T-cell (primary cell): ENCODE measurements at regions of chr4 and their contacts with region 1.

Region 1: DNA sequence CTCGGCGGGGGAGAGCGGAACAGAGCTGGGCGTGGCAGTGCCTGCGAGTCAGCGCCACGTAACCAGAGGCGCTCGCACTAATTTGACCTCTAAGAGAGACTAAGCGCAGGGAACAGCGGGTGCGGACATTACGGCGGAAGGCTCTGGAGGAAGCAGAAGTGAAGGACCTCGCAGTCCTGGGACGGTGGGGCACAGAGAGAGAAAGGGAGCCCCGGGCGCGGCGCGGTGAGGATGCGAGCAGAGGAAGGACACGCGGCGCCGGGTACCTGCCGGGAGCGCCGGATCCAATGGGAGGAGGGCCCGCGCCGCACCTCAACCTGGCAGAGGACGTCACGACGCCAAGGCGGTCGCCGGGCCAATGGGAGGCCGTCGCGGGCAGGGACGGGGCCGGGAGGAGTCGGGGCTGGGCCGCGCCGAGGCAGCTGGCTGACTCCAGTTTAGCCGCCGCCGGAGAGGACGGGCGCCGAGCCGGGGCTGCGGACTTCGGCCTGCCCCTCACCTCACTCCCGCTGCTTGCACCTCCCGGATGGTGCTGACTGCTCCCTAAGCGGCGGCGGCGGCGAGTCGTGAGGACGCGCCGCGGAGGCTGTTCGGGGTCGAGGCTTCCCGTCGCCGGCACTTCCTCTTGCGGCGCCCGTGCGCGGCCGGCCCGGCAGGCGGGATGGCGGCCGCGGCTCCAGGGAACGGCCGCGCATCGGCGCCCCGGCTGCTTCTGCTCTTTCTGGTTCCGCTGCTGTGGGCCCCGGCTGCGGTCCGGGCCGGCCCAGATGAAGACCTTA is at the start of gene TMEM165:
- DNase-seq: peak; percentile 72 to 92 (median 81)
- ATAC-seq: peak; percentile 95 to 97 (median 96)
- H3K4me3 ChIP-seq: peak within 1 kb of the TSS; percentile 68 to 81
- H3K4me3 Mint-ChIP-seq: peak within 1 kb of the TSS; percentile 95 to 97 (median 96)
- H3K27ac ChIP-seq: peak within 1 kb of the TSS; percentile 79
- H3K27ac Mint-ChIP-seq: peak within 1 kb of the TSS; percentile 95 to 99
- H3K4me1 ChIP-seq: peaks cover 26 to 29% of the 10 kb centered on the region in 2 experiments
- H3K4me1 Mint-ChIP-seq: peaks cover 39 to 44% (median 42%) of the 10 kb centered on the region in 3 donors
- H3K27me3 ChIP-seq: no peaks in the 10 kb centered on the region
- H3K27me3 Mint-ChIP-seq: no peaks in the 10 kb centered on the region
- total RNA-seq, gene TMEM165: 48.5 to 65.0 (median 56.8) TPM

Region 2: GRCh38 chr4:54056360-54056759 is 1339.4 kb before region 1 on chr4:
- CTCF ChIA-PET with region 1: no interaction called
- POLR2A ChIA-PET with region 1: interaction called in 1 of 2 experiments, 10 read pairs
- DNase-seq: peak in 1 of 35 experiments; percentile 28
- ATAC-seq: peak; percentile 67 to 76 (median 72)
- H3K4me3 ChIP-seq: no peak overlapping the region
- H3K4me3 Mint-ChIP-seq: peak overlapping the region; percentile 13 to 74 (median 25)
- H3K27ac ChIP-seq: no peak overlapping the region
- H3K27ac Mint-ChIP-seq: no peak overlapping the region
- H3K4me1 ChIP-seq: peaks cover 14 to 48% of the 10 kb centered on the region in 2 experiments
- H3K4me1 Mint-ChIP-seq: peaks cover 77 to 81% (median 78%) of the 10 kb centered on the region in 3 donors
- H3K27me3 ChIP-seq: no peaks in the 10 kb centered on the region
- H3K27me3 Mint-ChIP-seq: no peaks in the 10 kb centered on the region

Region 3: DNA sequence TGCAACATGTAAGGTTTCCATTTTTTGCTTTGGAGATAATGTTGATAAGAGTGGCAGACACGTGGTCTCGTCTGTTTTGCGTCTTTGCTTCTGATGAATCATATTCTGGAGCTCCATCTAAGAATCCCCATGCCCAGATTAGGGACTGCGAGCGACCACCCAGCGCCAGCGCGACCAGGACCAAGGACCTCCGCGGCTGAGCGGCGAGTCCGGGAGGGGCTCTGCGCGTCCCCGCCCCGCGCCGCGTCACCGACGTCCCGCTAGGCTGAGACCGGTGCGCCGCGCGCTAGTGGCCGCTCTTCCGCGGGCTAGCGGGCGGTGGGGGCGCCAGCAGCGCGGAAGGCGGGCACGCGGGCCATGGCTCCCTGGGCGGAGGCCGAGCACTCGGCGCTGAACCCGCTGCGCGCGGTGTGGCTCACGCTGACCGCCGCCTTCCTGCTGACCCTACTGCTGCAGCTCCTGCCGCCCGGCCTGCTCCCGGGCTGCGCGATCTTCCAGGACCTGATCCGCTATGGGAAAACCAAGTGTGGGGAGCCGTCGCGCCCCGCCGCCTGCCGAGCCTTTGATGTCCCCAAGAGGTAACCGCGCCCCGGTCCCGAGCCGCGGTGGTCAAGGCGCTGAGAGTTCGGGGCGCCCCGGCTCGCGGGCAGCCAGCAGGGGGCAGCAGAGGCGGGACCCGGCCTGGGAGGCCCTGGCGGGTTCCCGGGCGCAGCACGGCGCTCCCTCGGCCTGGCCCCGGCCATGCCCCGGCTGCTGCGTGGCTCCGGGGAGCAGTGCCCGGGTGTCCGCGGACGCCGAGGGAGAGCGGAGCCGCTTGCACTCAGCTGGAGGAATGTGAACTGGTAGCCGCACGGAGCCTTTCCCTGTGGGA is 49.5 kb before region 1 on chr4 and contains the start of gene SRD5A3:
- CTCF ChIA-PET with region 1: interaction called, 9 to 26 read pairs
- POLR2A ChIA-PET with region 1: no interaction called
- DNase-seq: peak; percentile 13 to 84 (median 65)
- ATAC-seq: peak; percentile 91 to 94 (median 92)
- H3K4me3 ChIP-seq: peak within 1 kb of the TSS; percentile 67 to 72
- H3K4me3 Mint-ChIP-seq: peak within 1 kb of the TSS; percentile 76 to 89 (median 85)
- H3K27ac ChIP-seq: peak within 1 kb of the TSS; percentile 54
- H3K27ac Mint-ChIP-seq: peak within 1 kb of the TSS; percentile 81 to 85
- H3K4me1 ChIP-seq: peaks cover 0 to 11% of the 10 kb centered on the region in 2 experiments
- H3K4me1 Mint-ChIP-seq: peaks cover 10 to 19% (median 16%) of the 10 kb centered on the region in 3 donors
- H3K27me3 ChIP-seq: no peaks in the 10 kb centered on the region
- H3K27me3 Mint-ChIP-seq: no peaks in the 10 kb centered on the region
- total RNA-seq, gene SRD5A3: 3.6 to 6.8 (median 4.1) TPM

Region 4: GRCh38 chr4:55546756-55547465 is 151.2 kb after region 1 on chr4 and contains the start of gene CLOCK:
- CTCF ChIA-PET with region 1: interaction called in 1 of 2 experiments, 12 read pairs
- POLR2A ChIA-PET with region 1: interaction called, 3 to 22 read pairs
- DNase-seq: peak; percentile 59 to 91 (median 75)
- ATAC-seq: peak; percentile 73 to 76 (median 75)
- H3K4me3 ChIP-seq: peak within 1 kb of the TSS; percentile 65 to 83
- H3K4me3 Mint-ChIP-seq: peak within 1 kb of the TSS; percentile 91 to 95 (median 92)
- H3K27ac ChIP-seq: peak within 1 kb of the TSS; percentile 86
- H3K27ac Mint-ChIP-seq: peak within 1 kb of the TSS; percentile 93
- H3K4me1 ChIP-seq: peaks cover 5 to 12% of the 10 kb centered on the region in 2 experiments
- H3K4me1 Mint-ChIP-seq: peaks cover 35 to 54% (median 39%) of the 10 kb centered on the region in 3 donors
- H3K27me3 ChIP-seq: no peaks in the 10 kb centered on the region
- H3K27me3 Mint-ChIP-seq: no peaks in the 10 kb centered on the region
- total RNA-seq, gene CLOCK: 9.5 to 16.0 (median 11.6) TPM

Region 5: DNA sequence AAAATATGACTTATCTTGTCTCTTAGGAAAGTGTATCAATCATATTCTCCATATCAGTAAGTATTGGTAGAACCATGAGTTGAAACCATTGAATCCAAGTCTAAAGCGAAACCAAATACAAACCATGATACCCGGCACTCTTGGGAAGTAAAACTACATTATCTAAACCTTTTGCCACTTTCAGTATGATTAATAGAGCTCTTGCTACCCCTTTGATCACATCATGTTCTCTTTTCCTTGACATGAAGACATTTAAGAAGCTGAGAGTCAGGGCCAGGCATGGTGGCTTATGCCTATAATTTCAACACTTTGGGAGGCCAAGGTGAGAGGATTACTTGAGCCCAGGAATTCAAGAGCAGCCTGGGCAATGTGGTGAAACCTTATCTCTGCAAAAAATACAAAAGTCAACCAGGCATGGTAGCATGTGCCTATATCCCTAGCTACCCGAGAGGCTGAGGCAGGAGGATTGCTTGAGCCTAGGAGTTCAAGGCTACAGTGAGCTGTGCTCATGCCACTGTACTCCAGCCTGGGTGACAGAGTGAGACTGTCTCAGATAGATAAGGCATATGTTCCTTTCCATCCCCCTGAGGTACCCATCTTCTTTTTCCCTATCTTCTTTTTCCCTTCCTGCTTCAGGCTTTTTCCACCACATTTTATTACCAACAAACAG is 598.4 kb after region 1 on chr4:
- CTCF ChIA-PET with region 1: no interaction called
- POLR2A ChIA-PET with region 1: interaction called in 1 of 2 experiments, 12 read pairs
- DNase-seq: no peak
- ATAC-seq: no peak
- H3K4me3 ChIP-seq: no peak overlapping the region
- H3K4me3 Mint-ChIP-seq: peak overlapping the region in 1 of 3 donors; percentile 14
- H3K27ac ChIP-seq: no peak overlapping the region
- H3K27ac Mint-ChIP-seq: peak overlapping the region in 1 of 2 donors; percentile 31
- H3K4me1 ChIP-seq: no peaks in the 10 kb centered on the region
- H3K4me1 Mint-ChIP-seq: peaks cover 0 to 16% (median 8%) of the 10 kb centered on the region in 3 donors
- H3K27me3 ChIP-seq: no peaks in the 10 kb centered on the region
- H3K27me3 Mint-ChIP-seq: no peaks in the 10 kb centered on the region